ENCODE measurements at regions of chr12 and their contacts with region 1.

Region 1: DNA sequence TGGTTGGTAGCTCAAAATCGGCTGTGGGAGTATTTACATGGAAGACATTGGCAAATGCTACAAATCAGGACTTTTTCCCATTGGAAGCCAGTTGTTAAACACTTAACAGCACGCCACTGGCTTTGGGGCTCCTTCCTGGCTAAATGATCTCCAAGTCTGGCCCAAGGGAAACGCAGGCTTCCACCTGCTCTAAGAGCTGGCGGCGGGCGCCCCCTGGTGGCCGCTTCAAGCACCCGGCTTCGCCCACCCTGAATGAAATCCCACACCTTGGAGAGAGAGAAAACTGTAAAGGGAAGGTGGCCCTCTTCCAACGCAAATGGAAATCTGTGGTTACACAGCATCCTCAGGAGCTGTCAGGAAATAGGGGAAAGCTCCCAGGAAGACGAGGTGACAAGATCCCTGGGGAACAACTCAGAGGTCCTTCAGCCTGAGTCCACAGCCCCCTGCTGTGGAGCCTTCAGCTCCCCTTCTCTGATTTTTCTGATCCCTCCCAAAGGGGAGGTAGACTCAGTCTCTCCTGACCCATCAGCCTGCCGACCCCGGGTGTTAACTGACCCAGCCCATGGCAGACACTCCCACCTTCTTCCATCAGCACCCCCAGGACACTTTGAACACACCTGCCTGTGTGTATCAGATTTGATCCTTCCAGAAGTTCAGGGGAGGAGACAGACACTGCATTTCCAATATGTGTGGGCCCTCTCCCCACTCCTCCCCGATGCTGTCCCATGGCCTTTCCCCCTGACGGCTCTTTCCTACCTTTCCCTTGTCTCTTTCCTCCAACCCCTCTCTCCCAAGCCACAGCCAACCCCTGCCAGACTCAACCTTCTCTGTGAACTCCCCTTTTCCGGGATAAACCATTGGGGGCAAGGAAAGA is 15.4 kb downstream of the SELPLG start:
- DNase-seq: peak; percentile 88
- ATAC-seq: peak; percentile 35
- H3K4me3 ChIP-seq: no peak overlapping the region
- H3K4me3 Mint-ChIP-seq: no peak overlapping the region
- H3K27ac ChIP-seq: peak overlapping the region; percentile 80 to 93
- H3K27ac Mint-ChIP-seq: peak overlapping the region; percentile 98
- H3K4me1 ChIP-seq: peaks cover 41 to 49% of the 10 kb centered on the region in 2 donors
- H3K4me1 Mint-ChIP-seq: peaks cover 69% of the 10 kb centered on the region
- H3K27me3 ChIP-seq: no peaks in the 10 kb centered on the region
- H3K27me3 Mint-ChIP-seq: no peaks in the 10 kb centered on the region
- CTCF ChIP-seq: peak; percentile 98

Region 2: GRCh38 chr12:107938446-107938845 is 679.9 kb before region 1 on chr12:
- CTCF ChIA-PET with region 1: no interaction called
- POLR2A ChIA-PET with region 1: no interaction called
- intact Hi-C with region 1: no loop called
- DNase-seq: no peak
- ATAC-seq: no peak
- H3K4me3 ChIP-seq: no peak overlapping the region
- H3K4me3 Mint-ChIP-seq: no peak overlapping the region
- H3K27ac ChIP-seq: no peak overlapping the region
- H3K27ac Mint-ChIP-seq: no peak overlapping the region
- H3K4me1 ChIP-seq: no peaks in the 10 kb centered on the region
- H3K4me1 Mint-ChIP-seq: no peaks in the 10 kb centered on the region
- H3K27me3 ChIP-seq: peaks cover 0 to 12% (median 7%) of the 10 kb centered on the region in 4 experiments
- H3K27me3 Mint-ChIP-seq: peaks cover 43% of the 10 kb centered on the region
- CTCF ChIP-seq: no peak

Region 3: DNA sequence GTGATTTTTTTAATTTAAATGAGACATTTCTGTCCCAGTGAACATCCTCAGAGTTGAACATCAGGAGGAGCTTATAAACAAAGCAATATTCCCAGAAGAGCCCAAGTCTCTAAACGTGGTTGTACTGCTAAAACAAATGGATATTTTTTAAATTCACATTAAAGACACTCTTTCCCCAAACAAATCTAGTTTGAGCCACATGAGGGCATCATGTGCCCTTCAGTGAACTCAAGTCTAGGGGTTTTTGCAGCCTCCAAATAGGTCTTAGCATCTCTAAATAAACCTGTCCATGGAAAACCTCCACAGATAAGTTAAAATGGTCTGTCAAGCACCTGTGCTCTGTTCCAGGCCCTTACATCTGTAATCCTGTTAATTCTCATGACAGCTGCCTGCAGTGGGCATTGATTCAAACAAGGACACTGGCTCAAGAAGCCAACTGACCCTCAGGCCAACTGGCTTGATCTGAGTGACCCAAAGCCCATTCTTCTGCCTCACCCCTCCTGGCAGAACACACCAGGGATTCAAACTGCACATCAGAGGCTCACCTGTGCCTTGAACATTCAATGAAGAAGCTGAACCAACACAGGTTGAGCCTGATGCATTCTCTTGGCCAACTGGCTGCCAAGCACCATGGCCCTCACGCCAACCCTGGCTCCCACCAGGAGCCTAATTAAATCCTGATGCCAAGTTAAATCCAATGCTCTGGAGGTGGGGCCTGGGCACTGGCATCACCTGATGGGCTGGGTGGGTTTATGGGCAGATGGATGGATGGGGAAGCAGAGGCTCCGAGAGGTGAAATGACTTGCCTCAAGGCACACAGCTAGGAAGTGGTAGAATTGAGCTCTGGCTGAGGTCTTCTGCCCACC is 47.3 kb before region 1 on chr12:
- CTCF ChIA-PET with region 1: interaction called, 424 read pairs
- POLR2A ChIA-PET with region 1: interaction called, 26 read pairs
- intact Hi-C with region 1: loop called (anchors 1 kb)
- DNase-seq: peak; percentile 48
- ATAC-seq: no peak
- H3K4me3 ChIP-seq: no peak overlapping the region
- H3K4me3 Mint-ChIP-seq: no peak overlapping the region
- H3K27ac ChIP-seq: peak overlapping the region in 1 of 2 donors; percentile 64
- H3K27ac Mint-ChIP-seq: peak overlapping the region; percentile 80
- H3K4me1 ChIP-seq: peaks cover 56 to 76% of the 10 kb centered on the region in 2 donors
- H3K4me1 Mint-ChIP-seq: peaks cover 82% of the 10 kb centered on the region
- H3K27me3 ChIP-seq: no peaks in the 10 kb centered on the region
- H3K27me3 Mint-ChIP-seq: no peaks in the 10 kb centered on the region
- CTCF ChIP-seq: peak; percentile 41

Region 4: GRCh38 chr12:108605000-108605689 is 13.2 kb before region 1 on chr12:
- CTCF ChIA-PET with region 1: interaction called, 13 read pairs
- POLR2A ChIA-PET with region 1: no interaction called
- intact Hi-C with region 1: no loop called
- DNase-seq: no peak
- ATAC-seq: no peak
- H3K4me3 ChIP-seq: no peak overlapping the region
- H3K4me3 Mint-ChIP-seq: no peak overlapping the region
- H3K27ac ChIP-seq: no peak overlapping the region
- H3K27ac Mint-ChIP-seq: no peak overlapping the region
- H3K4me1 ChIP-seq: peaks cover 0 to 4% of the 10 kb centered on the region in 2 donors
- H3K4me1 Mint-ChIP-seq: no peaks in the 10 kb centered on the region
- H3K27me3 ChIP-seq: peaks cover 0 to 12% (median 2%) of the 10 kb centered on the region in 4 experiments
- H3K27me3 Mint-ChIP-seq: peaks cover 5% of the 10 kb centered on the region
- CTCF ChIP-seq: no peak

Region 5: GRCh38 chr12:108649669-108650068 is 31.4 kb after region 1 on chr12:
- CTCF ChIA-PET with region 1: interaction called, 133 read pairs
- POLR2A ChIA-PET with region 1: interaction called, 13 read pairs
- intact Hi-C with region 1: loop called (anchors 2 kb)
- DNase-seq: no peak
- ATAC-seq: no peak
- H3K4me3 ChIP-seq: no peak overlapping the region
- H3K4me3 Mint-ChIP-seq: no peak overlapping the region
- H3K27ac ChIP-seq: peak overlapping the region in 1 of 2 donors; percentile 4
- H3K27ac Mint-ChIP-seq: peak overlapping the region; percentile 3
- H3K4me1 ChIP-seq: peaks cover 26% of the 10 kb centered on the region in 2 donors
- H3K4me1 Mint-ChIP-seq: peaks cover 55% of the 10 kb centered on the region
- H3K27me3 ChIP-seq: no peaks in the 10 kb centered on the region
- H3K27me3 Mint-ChIP-seq: no peaks in the 10 kb centered on the region
- CTCF ChIP-seq: no peak

Region 6: GRCh38 chr12:108950991-108951739 is 332.8 kb after region 1 on chr12:
- CTCF ChIA-PET with region 1: interaction called, 9 read pairs
- POLR2A ChIA-PET with region 1: no interaction called
- intact Hi-C with region 1: loop called (anchors 5 kb)
- DNase-seq: peak; percentile 85
- ATAC-seq: peak; percentile 73
- H3K4me3 ChIP-seq: no peak overlapping the region
- H3K4me3 Mint-ChIP-seq: no peak overlapping the region
- H3K27ac ChIP-seq: no peak overlapping the region
- H3K27ac Mint-ChIP-seq: no peak overlapping the region
- H3K4me1 ChIP-seq: peaks cover 0 to 4% of the 10 kb centered on the region in 2 donors
- H3K4me1 Mint-ChIP-seq: peaks cover 6% of the 10 kb centered on the region
- H3K27me3 ChIP-seq: peaks cover 0 to 5% (median 0%) of the 10 kb centered on the region in 4 experiments
- H3K27me3 Mint-ChIP-seq: peaks cover 9% of the 10 kb centered on the region
- CTCF ChIP-seq: peak; percentile 99

Measured in B cell (primary cell).